H1 (cell line): ENCODE measurements at regions of chr19 and their contacts with region 1.

Region 1: GRCh38 chr19:19488875-19489690 is 26.3 kb downstream of the TSSK6 start:
- DNase-seq: peak; percentile 70 to 87
- H3K4me3 ChIP-seq: peak overlapping the region in 1 of 4 experiments; percentile 11; a peak in 1 of 8 replicates
- H3K27ac ChIP-seq: peak overlapping the region; percentile 67; the same call in 1 of the 2 replicates
- H3K4me1 ChIP-seq: peaks cover 11 to 28% (median 19%) of the 10 kb centered on the region in 4 experiments
- H3K27me3 ChIP-seq: no peaks in the 10 kb centered on the region
- CTCF ChIP-seq: no peak
- EP300 ChIP-seq: peak in 1 of 2 experiments; percentile 87; a peak in 1 of 3 replicates
- POLR2A ChIP-seq: peak in 1 of 2 experiments; percentile 33; a peak in 1 of 3 replicates
- RAD21 ChIP-seq: no peak; a peak in 1 of 4 replicates

Region 2: DNA sequence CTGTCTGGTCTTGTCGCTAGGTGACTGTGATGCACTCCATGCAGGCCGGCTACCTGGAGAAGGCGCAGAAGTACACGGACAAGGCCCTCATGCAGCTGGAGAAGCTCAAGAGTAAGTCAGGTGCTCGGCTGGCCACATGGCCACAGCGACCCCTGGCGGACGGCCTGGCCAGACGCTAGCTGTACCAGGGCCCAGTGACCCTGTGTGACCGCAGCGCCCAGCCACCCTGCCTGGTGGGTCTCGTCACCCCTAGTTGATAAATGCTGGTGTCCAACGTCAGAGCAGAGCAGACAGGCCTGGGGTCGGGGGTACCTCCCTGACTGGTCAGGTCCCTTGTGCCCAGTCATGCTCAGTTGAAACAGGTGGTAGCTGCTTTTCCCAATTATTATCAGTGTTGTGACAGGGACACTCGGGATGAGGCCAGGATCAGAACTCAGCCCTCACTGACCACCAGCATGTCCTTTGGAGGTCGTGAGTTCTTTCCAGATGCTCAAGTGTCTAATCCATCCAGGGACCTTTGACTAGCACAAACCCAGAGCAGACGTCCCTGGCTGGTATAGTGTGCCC is 146.2 kb before region 1 on chr19:
- CTCF ChIA-PET with region 1: interaction called, 11 read pairs
- POLR2A ChIA-PET with region 1: no interaction called
- DNase-seq: peak; percentile 71 to 95
- H3K4me3 ChIP-seq: no peak overlapping the region
- H3K27ac ChIP-seq: no peak overlapping the region
- H3K4me1 ChIP-seq: no peaks in the 10 kb centered on the region; a peak in 1 of 7 replicates
- H3K27me3 ChIP-seq: no peaks in the 10 kb centered on the region
- CTCF ChIP-seq: peak; percentile 91 to 99 (median 99)
- EP300 ChIP-seq: no peak
- POLR2A ChIP-seq: no peak
- RAD21 ChIP-seq: peak; percentile 75 to 78

Region 3: DNA sequence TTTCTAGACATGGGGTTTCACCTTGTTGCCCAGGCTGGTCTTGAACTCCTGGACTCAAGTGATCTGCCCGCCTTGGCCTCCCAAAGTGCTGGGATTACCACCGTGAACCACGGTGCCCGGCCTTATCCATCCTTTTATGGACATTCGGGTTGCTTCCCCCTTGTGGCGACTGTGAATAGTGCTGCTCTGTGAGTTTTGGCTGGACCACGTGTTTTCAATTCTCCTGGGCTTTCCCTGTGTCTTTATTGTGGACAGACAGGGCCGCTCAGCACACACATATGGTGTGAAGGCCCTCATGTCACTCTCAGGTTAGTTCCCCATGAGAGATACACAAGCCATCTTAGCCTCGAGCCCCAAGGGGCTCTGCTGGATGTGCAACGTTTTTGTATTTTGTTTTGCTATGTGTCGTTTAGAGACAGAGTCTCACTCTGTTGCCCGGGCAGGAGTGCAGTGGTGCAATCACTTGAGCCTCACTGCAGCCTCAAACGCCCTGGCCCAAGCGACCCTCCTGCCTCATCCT is 127.9 kb before region 1 on chr19:
- CTCF ChIA-PET with region 1: interaction called, 146 read pairs
- POLR2A ChIA-PET with region 1: interaction called, 44 read pairs
- DNase-seq: peak; percentile 71 to 90
- H3K4me3 ChIP-seq: no peak overlapping the region
- H3K27ac ChIP-seq: no peak overlapping the region
- H3K4me1 ChIP-seq: no peaks in the 10 kb centered on the region; a peak in 2 of 7 replicates
- H3K27me3 ChIP-seq: 0 out of 7 replicates have a peak, but pooled peaks cover 0 to 4% (median 0%) of the 10 kb centered on the region in 4 experiments
- CTCF ChIP-seq: peak; percentile 74 to 87 (median 79)
- EP300 ChIP-seq: no peak
- POLR2A ChIP-seq: no peak
- RAD21 ChIP-seq: peak; percentile 46 to 53

Region 4: DNA sequence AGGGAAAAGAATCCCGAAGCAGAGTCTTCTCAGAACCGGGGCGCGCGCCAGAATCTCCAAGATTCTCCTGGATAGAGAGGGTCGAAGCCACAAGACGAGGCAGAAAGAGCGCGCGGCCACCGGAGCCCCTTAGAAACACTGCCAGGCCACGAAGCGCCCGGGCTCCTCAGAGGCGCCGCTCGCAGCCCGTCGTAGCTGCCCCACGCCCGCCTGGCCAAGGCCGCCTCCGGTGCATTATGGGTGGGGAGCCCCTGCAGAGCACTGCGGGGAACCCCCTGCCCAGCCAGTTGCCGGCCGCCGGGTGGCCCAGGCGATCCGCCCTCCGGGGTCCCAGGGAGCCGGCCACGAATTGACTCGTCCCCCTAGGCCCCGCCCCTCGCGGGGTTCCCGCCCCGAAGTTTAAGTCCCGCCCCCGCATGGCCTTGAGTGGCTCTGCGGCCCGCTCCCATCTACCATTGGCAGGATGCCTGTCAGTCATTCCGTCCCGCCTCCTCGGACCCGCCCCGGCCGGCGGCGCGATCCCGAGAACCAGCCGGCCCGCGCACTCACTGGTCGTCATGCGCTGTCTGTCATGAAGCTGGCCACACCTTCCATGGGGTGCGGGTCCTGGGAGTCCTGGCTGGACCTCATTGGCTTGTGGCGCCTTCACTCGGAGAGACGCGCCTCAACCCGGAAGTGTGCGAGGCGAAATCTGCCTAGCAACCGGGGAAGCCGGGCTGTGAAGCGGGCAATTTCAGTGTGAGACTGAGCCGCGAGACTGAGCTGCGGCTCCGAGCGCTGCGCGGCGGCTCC is 103.8 kb before region 1 on chr19:
- CTCF ChIA-PET with region 1: interaction called, 25 read pairs
- POLR2A ChIA-PET with region 1: interaction called, 6 read pairs
- DNase-seq: peak; percentile 99 to 100
- H3K4me3 ChIP-seq: peak overlapping the region; percentile 57 to 96 (median 82)
- H3K27ac ChIP-seq: peak overlapping the region; percentile 62; the same call in 1 of the 2 replicates
- H3K4me1 ChIP-seq: peaks cover 4 to 8% (median 5%) of the 10 kb centered on the region in 4 experiments; a peak in 6 of 7 replicates
- H3K27me3 ChIP-seq: peaks cover 0 to 3% (median 3%) of the 10 kb centered on the region in 4 experiments; a peak in 2 of 7 replicates
- CTCF ChIP-seq: no peak
- EP300 ChIP-seq: no peak
- POLR2A ChIP-seq: peak; percentile 80 to 87
- RAD21 ChIP-seq: no peak

Region 5: GRCh38 chr19:19418555-19419260 is 70.4 kb before region 1 on chr19:
- CTCF ChIA-PET with region 1: interaction called, 13 read pairs
- POLR2A ChIA-PET with region 1: interaction called, 3 read pairs
- DNase-seq: no peak
- H3K4me3 ChIP-seq: no peak overlapping the region
- H3K27ac ChIP-seq: no peak overlapping the region
- H3K4me1 ChIP-seq: peaks cover 0 to 3% (median under 1%) of the 10 kb centered on the region in 4 experiments; a peak in 3 of 7 replicates
- H3K27me3 ChIP-seq: no peaks in the 10 kb centered on the region
- CTCF ChIP-seq: no peak
- EP300 ChIP-seq: no peak
- POLR2A ChIP-seq: no peak
- RAD21 ChIP-seq: no peak

Region 6: DNA sequence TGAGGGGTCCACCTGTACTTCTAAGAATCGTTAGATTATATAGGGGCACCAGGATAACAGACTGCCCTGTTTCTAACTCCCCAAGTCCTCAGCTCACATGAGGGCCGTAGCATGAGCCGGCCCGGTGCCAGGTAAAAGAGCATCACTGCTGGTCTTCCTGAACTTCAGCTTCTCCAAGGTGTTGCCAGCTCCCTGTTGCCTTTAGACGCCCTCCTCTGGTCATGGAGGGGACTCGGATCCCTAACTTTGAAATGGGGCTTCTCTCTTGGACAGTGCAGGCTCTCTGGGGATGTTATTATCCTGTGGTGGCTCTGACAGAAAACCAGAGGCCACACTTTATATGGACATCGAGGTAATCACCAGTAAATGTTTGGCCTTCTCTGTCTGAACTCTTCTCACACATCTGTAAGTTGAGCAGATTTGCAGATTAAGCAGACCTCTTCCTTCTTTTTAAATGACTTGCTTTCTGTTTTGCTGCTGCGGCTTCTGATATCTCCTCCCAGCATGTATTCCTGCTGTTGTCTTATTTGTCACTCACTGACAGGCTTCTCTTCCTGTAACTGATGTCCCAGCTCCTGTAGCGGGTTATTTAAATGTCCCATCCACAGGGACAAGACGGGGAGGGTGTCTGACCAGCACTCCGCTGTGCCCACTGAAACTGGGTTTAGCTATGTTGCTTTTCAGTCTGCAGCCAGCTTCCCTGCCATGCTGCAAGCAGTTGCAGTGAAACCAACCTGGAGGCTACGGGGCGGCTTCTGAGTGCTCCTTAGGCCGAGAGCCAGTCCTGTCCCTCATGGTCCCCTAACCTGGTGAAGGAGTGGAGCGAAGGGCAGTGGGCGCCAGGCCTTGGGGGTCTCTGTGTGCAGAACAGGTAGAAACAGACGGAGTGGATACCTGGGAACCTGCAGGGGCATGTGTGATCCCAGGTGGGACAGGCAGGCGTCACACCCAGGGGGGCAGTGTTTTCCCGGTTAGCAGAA is 12.9 kb before region 1 on chr19:
- CTCF ChIA-PET with region 1: interaction called, 48 read pairs
- POLR2A ChIA-PET with region 1: interaction called, 6 read pairs
- DNase-seq: no peak
- H3K4me3 ChIP-seq: peak overlapping the region in 1 of 4 experiments; percentile 42; a peak in 3 of 8 replicates
- H3K27ac ChIP-seq: no peak overlapping the region
- H3K4me1 ChIP-seq: peaks cover 12 to 21% (median 17%) of the 10 kb centered on the region in 4 experiments
- H3K27me3 ChIP-seq: no peaks in the 10 kb centered on the region
- CTCF ChIP-seq: peak; percentile 59 to 70 (median 60)
- EP300 ChIP-seq: no peak
- POLR2A ChIP-seq: no peak
- RAD21 ChIP-seq: peak; percentile 68 to 77

Region 7: DNA sequence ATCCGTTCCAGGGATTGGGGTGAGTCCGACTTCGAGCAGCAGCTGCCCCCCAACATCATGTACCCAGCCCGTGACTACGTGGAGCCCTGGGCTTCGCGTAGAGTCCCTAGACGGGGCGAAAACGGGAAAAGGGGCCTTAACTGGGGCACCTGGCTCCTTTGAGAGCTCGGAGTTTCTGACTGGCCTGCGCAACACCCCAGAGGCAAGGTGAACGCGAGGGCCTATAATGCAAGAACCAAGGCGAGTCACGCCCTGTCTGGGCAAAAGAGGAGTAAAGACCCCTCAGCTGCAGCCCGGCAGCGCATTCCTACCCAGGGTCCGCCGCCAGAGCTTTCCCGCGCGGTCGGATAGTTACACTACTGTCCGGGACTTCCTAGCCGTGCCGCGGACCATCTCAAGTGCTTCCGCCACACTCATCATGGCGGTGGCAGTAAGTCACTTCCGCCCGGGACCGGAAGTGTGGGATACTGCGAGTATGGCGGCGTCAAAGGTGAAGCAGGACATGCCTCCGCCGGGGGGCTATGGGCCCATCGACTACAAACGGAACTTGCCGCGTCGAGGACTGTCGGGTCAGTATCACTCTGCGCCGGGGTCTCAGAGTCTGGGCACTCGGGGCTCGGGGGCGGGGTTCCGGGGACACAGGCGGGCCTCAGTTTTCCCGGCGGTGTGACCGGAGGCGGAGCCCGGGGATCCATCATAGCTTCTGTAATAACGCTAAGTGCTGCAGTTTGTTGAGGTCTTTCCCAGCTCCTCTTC is 26.9 kb after region 1 on chr19 and contains the start of gene NDUFA13:
- CTCF ChIA-PET with region 1: interaction called, 10 read pairs
- POLR2A ChIA-PET with region 1: interaction called, 9 read pairs
- DNase-seq: peak; percentile 70 to 98
- H3K4me3 ChIP-seq: peak within 1 kb of the TSS; percentile 68 to 87 (median 85)
- H3K27ac ChIP-seq: peak within 1 kb of the TSS; percentile 57; the same call in 1 of the 2 replicates
- H3K4me1 ChIP-seq: peaks cover 0 to 2% (median 0%) of the 10 kb centered on the region in 4 experiments; a peak in 1 of 7 replicates
- H3K27me3 ChIP-seq: no peaks in the 10 kb centered on the region; a peak in 1 of 7 replicates
- CTCF ChIP-seq: no peak; a peak in 1 of 4 replicates
- EP300 ChIP-seq: no peak
- POLR2A ChIP-seq: peak; percentile 84 to 86
- RAD21 ChIP-seq: no peak
- total RNA-seq, gene NDUFA13: 413 and 425 TPM in 2 replicates